Heart right ventricle (tissue), 16 donors: ENCODE measurements at regions of chr17 and their contacts with region 1.

Region 1: DNA sequence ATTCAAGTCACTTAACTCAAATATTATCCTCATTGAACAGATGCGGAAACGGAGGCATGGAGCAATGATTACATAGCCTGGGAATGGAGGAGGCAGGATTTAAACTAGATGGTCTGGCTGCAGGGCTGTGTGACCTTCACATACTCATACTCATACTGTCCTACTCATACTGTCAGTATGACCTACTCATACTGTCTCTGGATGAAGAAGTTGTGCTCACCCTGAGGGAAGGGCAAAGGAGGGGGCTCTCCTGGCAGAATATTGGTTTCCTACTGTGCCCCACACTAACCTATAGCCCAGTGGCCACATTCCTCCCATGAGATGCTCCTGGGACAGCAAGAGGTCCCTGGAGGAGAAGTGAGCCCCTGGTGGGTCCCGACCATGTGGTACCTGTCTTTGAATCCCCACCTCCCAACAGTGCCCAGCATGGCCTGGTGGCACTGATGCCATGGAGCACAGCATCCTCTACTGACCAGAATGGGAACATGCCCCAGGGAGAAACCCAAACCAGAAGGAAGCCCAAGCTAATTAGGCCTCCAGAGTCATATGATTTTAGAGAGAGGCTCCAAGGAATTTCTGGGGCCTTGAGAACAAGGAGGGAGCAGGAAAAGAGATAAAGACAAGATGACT is 197.3 kb upstream of the SDK2 start:
- DNase-seq: no peak
- ATAC-seq: peak in 6 of 8 donors; percentile 56 to 68 (median 64)
- H3K4me3 ChIP-seq: no peak overlapping the region
- H3K27ac ChIP-seq: no peak overlapping the region
- H3K4me1 ChIP-seq: no peaks in the 10 kb centered on the region
- H3K27me3 ChIP-seq: peaks cover 0 to 22% (median 9%) of the 10 kb centered on the region in 7 donors
- CTCF ChIP-seq: peak in 8 of 9 donors; percentile 40 to 70 (median 60)

Region 2: GRCh38 chr17:73645050-73645978 is 196.2 kb before region 1 on chr17:
- intact Hi-C with region 1: loop called in 4 of 10 experiments (anchors 5 to 10 kb)
- DNase-seq: peak; percentile 31 to 54
- ATAC-seq: peak; percentile 60 to 83 (median 76)
- H3K4me3 ChIP-seq: peak overlapping the region in 9 of 10 donors; percentile 42 to 66 (median 55)
- H3K27ac ChIP-seq: peak overlapping the region in 5 of 10 donors; percentile 1 to 60 (median 40)
- H3K4me1 ChIP-seq: peaks cover 0 to 31% (median 20%) of the 10 kb centered on the region in 9 donors
- H3K27me3 ChIP-seq: peaks cover 0 to 92% (median 70%) of the 10 kb centered on the region in 7 donors
- CTCF ChIP-seq: peak in 5 of 9 donors; percentile 6 to 31 (median 20)

Region 3: DNA sequence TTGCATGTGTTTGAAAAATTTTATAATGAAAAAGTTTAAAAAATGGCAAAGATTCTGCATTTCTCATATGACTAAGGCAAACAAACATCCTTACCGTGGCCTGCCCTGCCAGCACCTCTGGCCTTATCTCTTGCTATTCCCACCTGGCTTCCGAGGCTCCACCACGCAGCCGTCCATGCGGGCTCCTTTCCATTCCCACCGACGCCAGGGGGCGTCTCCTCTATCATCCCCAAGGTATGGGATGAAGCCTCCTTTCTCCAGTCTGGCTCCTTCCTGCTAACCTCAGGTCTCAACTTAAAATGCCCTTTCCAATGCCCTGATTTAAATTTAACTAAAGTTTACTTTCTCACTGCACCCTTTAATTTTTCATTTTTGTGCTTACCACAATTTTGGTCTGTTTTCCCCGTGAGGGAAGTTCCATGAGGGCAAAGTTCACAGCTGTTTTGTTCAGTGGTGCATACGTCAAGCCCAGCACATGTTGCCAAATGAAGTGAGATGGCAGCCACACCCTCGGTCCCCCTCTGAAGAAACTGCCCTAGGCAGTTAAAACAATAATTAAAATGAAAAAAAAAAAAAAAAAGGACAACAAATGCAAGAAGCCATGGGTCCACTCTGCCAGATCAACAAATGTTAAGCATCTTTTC is 184.0 kb before region 1 on chr17:
- intact Hi-C with region 1: loop called in 9 of 10 experiments (anchors 2 to 10 kb)
- DNase-seq: peak; percentile 41 to 63
- ATAC-seq: peak in 5 of 8 donors; percentile 55 to 71 (median 67)
- H3K4me3 ChIP-seq: no peak overlapping the region
- H3K27ac ChIP-seq: no peak overlapping the region
- H3K4me1 ChIP-seq: peaks cover 0 to 9% (median 0%) of the 10 kb centered on the region in 9 donors
- H3K27me3 ChIP-seq: peaks cover 0 to 18% (median 9%) of the 10 kb centered on the region in 7 donors
- CTCF ChIP-seq: peak in 7 of 9 donors; percentile 51 to 70 (median 67)

Region 4: DNA sequence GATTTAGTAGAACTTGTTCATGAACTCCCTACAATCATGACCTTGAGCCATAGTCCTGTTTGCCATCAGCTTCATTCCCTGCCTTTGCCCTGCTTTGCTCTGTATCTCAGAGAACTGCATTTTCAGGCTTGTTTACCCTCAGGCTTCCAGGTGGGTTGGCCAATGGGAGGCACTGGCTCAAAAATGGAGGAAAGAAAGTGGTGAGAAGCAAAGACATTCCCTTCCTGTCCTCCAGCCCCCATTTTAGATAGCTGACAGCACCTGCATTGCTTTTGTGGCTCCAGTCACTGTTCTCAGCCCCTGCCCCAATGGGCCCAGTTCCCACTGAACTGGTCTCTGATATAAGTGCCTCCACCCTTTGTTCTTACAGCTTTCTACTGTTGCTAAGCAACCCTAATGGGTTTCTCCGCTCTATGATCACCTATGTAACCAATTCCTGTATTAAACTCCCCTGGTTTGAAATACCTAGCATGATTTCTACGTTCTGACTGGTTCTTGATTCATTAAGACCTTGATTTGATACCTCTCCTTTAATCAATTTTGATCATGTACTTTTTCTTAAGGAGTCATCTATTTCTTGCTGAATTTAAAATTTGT is 177.9 kb before region 1 on chr17:
- intact Hi-C with region 1: loop called in 5 of 10 experiments (anchors 5 to 10 kb)
- DNase-seq: no peak
- ATAC-seq: no peak
- H3K4me3 ChIP-seq: no peak overlapping the region
- H3K27ac ChIP-seq: no peak overlapping the region
- H3K4me1 ChIP-seq: peaks cover 0 to 20% (median 0%) of the 10 kb centered on the region in 9 donors
- H3K27me3 ChIP-seq: peaks cover 0 to 42% (median 38%) of the 10 kb centered on the region in 7 donors
- CTCF ChIP-seq: no peak

Region 5: DNA sequence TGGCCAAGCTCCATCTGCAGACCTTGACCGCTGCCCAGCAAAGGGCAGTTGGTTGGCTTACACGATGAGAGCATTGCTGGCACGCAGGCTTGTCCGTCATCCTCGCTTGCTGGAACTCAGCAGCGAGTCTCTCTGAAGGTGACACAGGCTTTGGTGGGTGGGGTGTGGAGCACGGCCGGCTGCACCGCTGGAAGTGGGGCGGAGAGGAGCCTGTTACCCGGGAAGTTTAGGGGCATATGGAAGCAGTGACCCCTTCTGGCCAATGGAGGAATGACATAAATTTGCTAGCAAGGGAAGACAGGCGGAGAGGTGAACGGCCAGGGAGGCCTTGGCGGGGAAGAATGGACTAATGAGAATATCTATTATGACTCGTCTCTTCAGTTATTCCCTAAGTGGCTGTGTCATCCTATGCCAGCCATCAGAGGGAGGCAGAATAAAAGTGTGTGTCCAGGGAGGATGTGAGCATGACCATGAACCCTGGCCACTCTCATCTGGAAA is 131.4 kb before region 1 on chr17:
- intact Hi-C with region 1: loop called in 1 of 10 experiments (anchors 5 kb)
- DNase-seq: peak; percentile 60 to 72
- ATAC-seq: peak; percentile 82 to 97 (median 94)
- H3K4me3 ChIP-seq: no peak overlapping the region
- H3K27ac ChIP-seq: no peak overlapping the region
- H3K4me1 ChIP-seq: peaks cover 0 to 10% (median 5%) of the 10 kb centered on the region in 9 donors
- H3K27me3 ChIP-seq: peaks cover 0 to 50% (median 20%) of the 10 kb centered on the region in 7 donors
- CTCF ChIP-seq: peak; percentile 67 to 89 (median 82)

Region 6: GRCh38 chr17:73720187-73720834 is 121.2 kb before region 1 on chr17:
- intact Hi-C with region 1: no loop called
- DNase-seq: no peak
- ATAC-seq: peak in 3 of 8 donors; percentile 18 to 25 (median 23)
- H3K4me3 ChIP-seq: no peak overlapping the region
- H3K27ac ChIP-seq: peak overlapping the region in 1 of 10 donors; percentile 52
- H3K4me1 ChIP-seq: peaks cover 5 to 18% (median 10%) of the 10 kb centered on the region in 9 donors
- H3K27me3 ChIP-seq: peaks cover 0 to 7% (median 6%) of the 10 kb centered on the region in 7 donors
- CTCF ChIP-seq: no peak

Region 7: DNA sequence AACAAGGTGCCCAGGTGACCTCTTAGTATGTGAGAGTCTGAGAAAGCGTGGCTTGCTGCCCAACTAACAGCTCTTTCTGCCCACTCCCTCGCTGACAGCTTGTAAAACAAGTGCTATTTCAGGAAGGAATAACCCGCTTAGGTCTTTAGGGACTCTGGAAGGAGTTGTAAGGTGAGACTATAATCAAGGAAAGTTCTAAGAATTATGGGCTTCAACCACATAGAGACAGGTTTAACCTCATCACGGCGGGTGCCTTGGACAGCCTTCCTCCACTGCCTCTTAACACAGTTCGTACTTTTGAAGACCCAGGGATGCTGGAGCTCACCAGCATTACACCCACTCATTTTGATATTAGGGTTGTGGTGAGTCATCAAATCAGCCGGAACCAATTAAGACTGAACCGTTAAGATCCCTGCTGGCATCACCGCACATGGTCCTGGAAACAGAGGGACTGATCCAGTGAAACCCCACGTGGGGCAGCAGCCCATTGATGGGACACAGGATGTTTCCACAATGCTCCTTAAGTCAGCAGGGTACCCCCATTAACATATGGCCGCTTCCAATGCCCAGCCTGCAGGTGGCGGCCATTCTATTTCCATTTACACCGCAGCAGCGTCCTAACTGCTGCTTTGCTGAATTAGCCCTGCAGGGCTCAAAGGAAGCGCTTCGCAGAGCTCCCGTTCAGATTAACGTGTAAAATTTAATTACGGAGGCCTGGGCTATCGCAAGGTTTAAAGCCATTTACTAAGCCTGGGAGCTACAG is 20.7 kb before region 1 on chr17:
- intact Hi-C with region 1: loop called in 1 of 10 experiments (anchors 2 kb)
- DNase-seq: no peak
- ATAC-seq: peak in 3 of 8 donors; percentile 24 to 49 (median 44)
- H3K4me3 ChIP-seq: no peak overlapping the region
- H3K27ac ChIP-seq: no peak overlapping the region
- H3K4me1 ChIP-seq: peaks cover 0 to 5% (median 0%) of the 10 kb centered on the region in 9 donors
- H3K27me3 ChIP-seq: peaks cover 0 to 18% (median 4%) of the 10 kb centered on the region in 7 donors
- CTCF ChIP-seq: peak in 5 of 9 donors; percentile 18 to 39 (median 36)

Region 8: GRCh38 chr17:73899839-73900238 is 58.3 kb after region 1 on chr17:
- intact Hi-C with region 1: loop called in 1 of 10 experiments (anchors 5 kb)
- DNase-seq: no peak
- ATAC-seq: no peak
- H3K4me3 ChIP-seq: no peak overlapping the region
- H3K27ac ChIP-seq: no peak overlapping the region
- H3K4me1 ChIP-seq: peaks cover 0 to 15% (median 12%) of the 10 kb centered on the region in 9 donors
- H3K27me3 ChIP-seq: peaks cover 0 to 96% (median 88%) of the 10 kb centered on the region in 7 donors
- CTCF ChIP-seq: no peak